ENCODE measurements at regions of chr2 and their contacts with region 1.

Region 1: DNA sequence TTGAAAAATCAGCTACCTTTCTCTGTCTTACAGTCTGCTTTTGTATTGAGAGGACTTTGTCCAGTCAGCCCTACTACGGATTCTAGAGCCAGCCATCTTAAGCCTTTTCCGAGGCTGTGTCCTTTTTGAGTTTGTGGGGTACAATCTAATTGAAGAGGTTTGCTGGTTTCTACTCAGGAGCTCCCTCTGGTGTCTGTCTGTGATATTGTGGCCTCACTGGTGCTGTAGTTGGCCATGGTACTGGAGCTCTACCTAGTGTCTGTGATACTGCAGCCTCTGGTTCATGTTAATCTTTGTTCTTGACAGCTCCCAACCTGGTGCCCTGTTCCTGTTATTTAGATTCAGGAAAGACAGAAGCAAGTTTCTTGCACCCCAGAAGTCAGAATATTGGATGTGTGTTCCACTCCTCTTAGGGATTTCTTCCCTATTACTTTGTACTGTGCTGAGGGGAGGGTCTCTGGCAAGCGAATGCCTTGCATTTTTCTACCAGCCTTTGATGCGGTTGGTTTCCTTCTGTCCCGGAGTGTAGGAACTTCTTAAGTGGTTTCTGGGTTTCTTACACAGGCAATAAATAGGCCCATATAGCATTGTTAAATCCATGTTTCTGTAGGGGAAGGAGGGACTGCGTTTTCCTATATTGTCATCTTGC is 78.5 kb downstream of the ACSL3 start:
- DNase-seq: peak; percentile 79
- ATAC-seq: peak; percentile 89
- H3K4me3 ChIP-seq: no peak overlapping the region
- H3K27ac ChIP-seq: no peak overlapping the region
- H3K4me1 ChIP-seq: no peaks in the 10 kb centered on the region
- H3K27me3 ChIP-seq: no peaks in the 10 kb centered on the region
- CTCF ChIP-seq: peak; percentile 86
- EP300 ChIP-seq: no peak
- POLR2A ChIP-seq: no peak
- RAD21 ChIP-seq: peak; percentile 83

Region 2: DNA sequence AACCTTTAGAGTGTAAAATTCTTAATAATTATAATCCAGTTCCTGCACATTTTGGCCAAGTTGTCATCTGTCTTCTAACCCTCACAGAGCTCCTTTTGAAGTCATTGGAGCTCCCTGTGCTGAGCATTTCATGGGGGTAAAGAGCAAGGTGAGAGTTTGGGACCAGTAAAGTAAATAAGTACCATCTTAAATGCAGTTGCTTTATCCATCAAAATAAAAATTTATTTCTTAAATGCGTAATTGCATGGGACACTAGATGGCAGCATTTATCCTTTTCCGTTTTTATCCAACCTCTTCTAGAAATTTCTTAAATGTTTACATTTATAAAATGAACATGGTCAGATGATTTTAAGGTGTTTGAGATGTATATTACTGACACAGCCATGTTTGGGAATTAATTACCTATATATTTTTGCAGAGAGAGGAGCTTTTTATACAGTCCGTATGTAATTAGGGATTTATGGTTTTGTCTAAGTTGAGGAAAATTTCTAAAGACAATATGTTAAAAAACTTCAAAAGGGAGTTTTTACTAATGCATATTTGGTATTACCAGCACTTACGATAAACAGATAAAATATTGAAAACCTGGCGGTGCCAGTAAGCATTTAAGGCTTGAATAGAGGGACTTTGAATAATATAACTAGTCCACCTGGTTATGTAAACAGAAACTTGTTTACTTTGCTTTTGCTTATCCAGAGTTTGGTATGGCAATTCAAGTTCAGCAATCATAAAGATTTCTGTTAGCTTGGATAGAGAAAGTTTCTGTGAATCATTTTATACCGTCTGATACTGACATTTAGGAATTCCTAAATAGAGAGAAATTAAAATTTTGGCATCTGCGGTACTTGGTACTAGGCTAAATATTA is 24.0 kb before region 1 on chr2:
- CTCF ChIA-PET with region 1: interaction called, 10 read pairs
- POLR2A ChIA-PET with region 1: no interaction called
- in situ Hi-C with region 1: no loop called
- intact Hi-C with region 1: loop called (anchors 1 kb)
- DNase-seq: no peak
- ATAC-seq: no peak
- H3K4me3 ChIP-seq: no peak overlapping the region
- H3K27ac ChIP-seq: no peak overlapping the region
- H3K4me1 ChIP-seq: peaks cover 66% of the 10 kb centered on the region
- H3K27me3 ChIP-seq: no peaks in the 10 kb centered on the region
- CTCF ChIP-seq: no peak; the same call in 1 of the 2 replicates
- EP300 ChIP-seq: no peak
- POLR2A ChIP-seq: no peak
- RAD21 ChIP-seq: no peak